ENCODE measurements at regions of chr14 and their contacts with region 1.

Region 1: GRCh38 chr14:21510735-21511657 is at the start of gene METTL3:
- DNase-seq: peak; percentile 96
- H3K4me3 Mint-ChIP-seq: peak within 1 kb of the TSS; percentile 99
- H3K27ac Mint-ChIP-seq: peak within 1 kb of the TSS; percentile 96
- H3K4me1 Mint-ChIP-seq: peaks cover 39% of the 10 kb centered on the region
- H3K27me3 Mint-ChIP-seq: no peaks in the 10 kb centered on the region
- total RNA-seq, gene METTL3: 64.1 TPM

Region 2: DNA sequence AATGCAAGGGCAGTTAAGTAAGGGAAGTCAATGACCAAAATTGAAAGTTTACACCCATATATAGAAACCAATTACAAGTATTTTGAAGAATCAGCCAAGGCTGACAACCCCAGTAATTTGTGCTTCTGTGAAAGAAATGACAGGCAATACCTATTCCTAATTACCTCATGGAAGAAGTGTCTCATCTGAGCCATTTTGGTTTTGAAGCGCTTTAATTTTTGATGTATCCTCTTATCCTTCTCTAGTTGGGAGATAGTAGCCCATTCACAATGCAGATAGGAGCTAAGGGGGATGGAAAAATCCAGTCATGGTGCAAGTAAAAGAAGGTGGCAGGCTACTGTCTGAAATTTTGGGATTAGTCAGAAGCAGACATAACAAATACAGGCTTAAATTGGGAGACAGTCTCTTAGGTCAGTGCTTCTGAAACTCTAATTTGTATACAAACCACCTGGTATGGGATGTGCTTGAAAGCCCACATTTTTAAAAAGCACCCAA is 96.8 kb before region 1 on chr14:
- CTCF ChIA-PET with region 1: no interaction called
- POLR2A ChIA-PET with region 1: no interaction called
- intact Hi-C with region 1: loop called (anchors 1 kb)
- DNase-seq: no peak
- H3K4me3 Mint-ChIP-seq: no peak overlapping the region
- H3K27ac Mint-ChIP-seq: peak overlapping the region; percentile 89
- H3K4me1 Mint-ChIP-seq: peaks cover 30% of the 10 kb centered on the region
- H3K27me3 Mint-ChIP-seq: no peaks in the 10 kb centered on the region

Region 3: GRCh38 chr14:21437063-21437901 is 73.7 kb before region 1 on chr14:
- CTCF ChIA-PET with region 1: no interaction called
- POLR2A ChIA-PET with region 1: interaction called, 5 read pairs
- intact Hi-C with region 1: loop called (anchors 2 kb)
- DNase-seq: peak; percentile 99
- H3K4me3 Mint-ChIP-seq: peak overlapping the region; percentile 80
- H3K27ac Mint-ChIP-seq: peak overlapping the region; percentile 71
- H3K4me1 Mint-ChIP-seq: peaks cover 52% of the 10 kb centered on the region
- H3K27me3 Mint-ChIP-seq: no peaks in the 10 kb centered on the region

Region 4: GRCh38 chr14:21498553-21499526 is 12.2 kb before region 1 on chr14:
- CTCF ChIA-PET with region 1: interaction called, 54 read pairs
- POLR2A ChIA-PET with region 1: interaction called, 6 read pairs
- intact Hi-C with region 1: no loop called
- DNase-seq: no peak
- H3K4me3 Mint-ChIP-seq: no peak overlapping the region
- H3K27ac Mint-ChIP-seq: peak overlapping the region; percentile 59
- H3K4me1 Mint-ChIP-seq: peaks cover 24% of the 10 kb centered on the region
- H3K27me3 Mint-ChIP-seq: no peaks in the 10 kb centered on the region

Region 5: GRCh38 chr14:21525962-21526671 is 15.1 kb after region 1 on chr14 and contains the start of gene SALL2:
- CTCF ChIA-PET with region 1: interaction called, 5 read pairs
- POLR2A ChIA-PET with region 1: interaction called, 6 read pairs
- intact Hi-C with region 1: loop called (anchors 1 kb)
- DNase-seq: peak; percentile 86
- H3K4me3 Mint-ChIP-seq: peak within 1 kb of the TSS; percentile 77
- H3K27ac Mint-ChIP-seq: no peak within 1 kb of the TSS
- H3K4me1 Mint-ChIP-seq: peaks cover 10% of the 10 kb centered on the region
- H3K27me3 Mint-ChIP-seq: no peaks in the 10 kb centered on the region
- total RNA-seq, gene SALL2: 4.4 to 4.8 TPM

Region 6: GRCh38 chr14:21557084-21557901 is 46.3 kb after region 1 on chr14:
- CTCF ChIA-PET with region 1: interaction called, 4 read pairs
- POLR2A ChIA-PET with region 1: no interaction called
- intact Hi-C with region 1: loop called (anchors 5 kb)
- DNase-seq: peak; percentile 76
- H3K4me3 Mint-ChIP-seq: no peak overlapping the region
- H3K27ac Mint-ChIP-seq: peak overlapping the region; percentile 16
- H3K4me1 Mint-ChIP-seq: peaks cover 5% of the 10 kb centered on the region
- H3K27me3 Mint-ChIP-seq: no peaks in the 10 kb centered on the region

Region 7: DNA sequence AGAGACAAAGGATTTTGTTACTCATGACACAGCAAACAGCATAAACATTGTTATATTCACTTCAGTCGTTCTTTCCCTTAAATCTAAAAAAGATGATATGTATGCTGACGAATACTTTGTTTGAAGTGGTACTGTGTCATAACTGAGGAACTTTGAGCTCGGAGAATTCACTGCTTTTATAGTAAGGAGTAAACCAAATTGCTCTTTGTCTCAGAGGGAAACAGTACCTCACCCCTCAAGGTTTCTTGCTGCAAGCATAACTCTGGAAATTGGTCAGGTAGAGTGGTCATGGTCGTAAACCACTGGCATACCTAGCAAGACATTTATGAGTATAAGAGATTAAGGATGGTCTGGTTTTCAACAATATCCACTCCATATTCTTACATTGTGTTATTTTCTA is 322.8 kb after region 1 on chr14:
- CTCF ChIA-PET with region 1: no interaction called
- POLR2A ChIA-PET with region 1: no interaction called
- intact Hi-C with region 1: no loop called
- DNase-seq: no peak
- H3K4me3 Mint-ChIP-seq: no peak overlapping the region
- H3K27ac Mint-ChIP-seq: no peak overlapping the region
- H3K4me1 Mint-ChIP-seq: no peaks in the 10 kb centered on the region
- H3K27me3 Mint-ChIP-seq: peaks cover 17% of the 10 kb centered on the region

Region 8: DNA sequence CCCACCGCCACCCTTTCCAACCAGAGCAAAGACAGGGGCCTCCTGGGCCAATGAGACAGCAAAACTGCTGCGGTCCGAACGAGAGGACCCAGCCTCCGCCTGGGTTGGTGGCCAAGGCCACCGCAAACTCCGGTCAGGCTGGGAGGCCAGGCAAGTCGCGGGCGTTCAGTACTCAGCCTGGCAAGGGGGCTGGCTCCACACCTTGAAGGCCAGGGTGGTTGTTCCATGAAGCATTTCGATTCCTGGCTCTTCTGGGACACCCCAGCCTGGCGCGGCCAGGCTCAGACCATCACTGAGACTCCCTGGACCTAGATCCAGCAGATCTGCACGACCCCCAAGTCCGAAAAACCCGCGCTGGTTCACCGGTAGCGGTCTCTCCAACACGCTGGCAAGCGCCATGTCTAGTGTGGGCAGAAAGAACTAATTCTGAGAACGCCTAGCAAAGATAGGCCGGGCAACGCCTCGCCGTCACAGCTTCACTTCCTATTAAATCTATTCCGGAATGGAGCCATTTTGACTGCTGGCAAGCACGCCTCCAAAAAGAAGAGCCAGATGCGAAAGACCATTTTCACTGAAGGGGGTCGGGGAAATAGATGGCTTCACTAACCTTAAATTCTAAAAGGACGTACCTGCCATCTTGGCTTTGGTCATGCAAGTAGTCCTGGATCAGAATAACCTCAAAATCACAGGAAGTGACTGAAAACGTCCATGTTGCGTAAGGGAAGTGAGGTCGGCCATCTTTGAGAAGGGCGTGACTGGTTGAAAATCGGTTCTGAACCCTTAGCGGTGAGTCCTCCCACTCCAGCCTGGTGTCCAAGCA is 1523.7 kb after region 1 on chr14 and contains the start of gene PSMB5:
- CTCF ChIA-PET with region 1: no interaction called
- POLR2A ChIA-PET with region 1: no interaction called
- intact Hi-C with region 1: loop called (anchors 2 kb)
- DNase-seq: peak; percentile 94
- H3K4me3 Mint-ChIP-seq: peak within 1 kb of the TSS; percentile 95
- H3K27ac Mint-ChIP-seq: peak within 1 kb of the TSS; percentile 95
- H3K4me1 Mint-ChIP-seq: peaks cover 28% of the 10 kb centered on the region
- H3K27me3 Mint-ChIP-seq: no peaks in the 10 kb centered on the region
- total RNA-seq, gene PSMB5: 116 to 119 TPM

Measured in activated CD4-positive, alpha-beta memory T cell treated with anti-CD3 and anti-CD28 coated beads for 36 hours (primary cell).